Endothelial cell of umbilical vein (primary cell): ENCODE measurements at regions of chr10 and their contacts with region 1.

Region 1: GRCh38 chr10:118754720-118755480 is at the start of gene CACUL1:
- DNase-seq: peak; percentile 100
- H3K4me3 ChIP-seq: peak within 1 kb of the TSS; percentile 55 to 96 (median 84)
- H3K27ac ChIP-seq: peak within 1 kb of the TSS; percentile 42
- H3K4me1 ChIP-seq: peaks cover 13% of the 10 kb centered on the region
- H3K27me3 ChIP-seq: peaks cover 0 to 2% of the 10 kb centered on the region in 2 experiments
- CTCF ChIP-seq: no peak
- POLR2A ChIP-seq: peak; percentile 74
- total RNA-seq, gene CACUL1: 35.1 and 38.6 TPM in 2 replicates

Region 2: DNA sequence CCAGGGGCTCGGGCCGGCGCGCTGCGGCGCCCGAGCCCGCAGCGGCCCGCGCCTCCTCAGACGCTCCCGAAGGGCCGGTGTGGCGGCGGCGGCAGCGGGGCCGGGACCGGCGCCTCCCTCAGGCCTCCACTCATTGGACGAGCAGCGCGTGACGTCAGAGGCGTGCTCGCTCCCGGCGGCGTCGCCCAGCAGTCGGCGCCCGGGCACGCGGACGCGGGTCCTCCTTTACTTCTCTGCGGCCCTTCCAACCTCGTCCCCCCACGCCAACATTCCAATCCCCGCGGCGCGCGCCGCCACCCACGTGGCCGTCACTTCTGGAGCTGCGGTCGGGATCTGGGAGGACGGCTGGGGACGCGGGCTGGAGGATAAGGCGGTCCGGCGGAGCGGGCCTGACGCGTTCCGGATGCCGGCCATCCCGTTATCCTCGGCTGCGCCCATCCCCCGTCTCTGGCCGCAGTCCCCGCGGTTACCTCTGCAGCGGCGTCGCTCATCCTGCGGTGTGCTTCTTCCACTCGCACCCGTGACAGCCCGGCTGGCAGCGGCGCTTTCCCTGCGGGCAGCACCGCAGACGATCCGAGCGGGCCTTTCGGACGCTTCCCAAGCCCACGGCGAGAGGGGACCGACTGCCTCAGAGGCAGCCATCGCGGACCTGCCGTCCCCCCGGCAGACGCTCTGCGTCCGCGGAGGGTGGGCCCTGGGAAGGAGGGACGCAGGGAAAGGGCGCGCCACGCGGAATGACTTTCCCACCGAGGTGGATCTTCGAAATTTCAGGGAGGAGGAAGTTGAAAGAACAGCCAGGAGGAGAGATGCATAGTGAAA is 1379.3 kb before region 1 on chr10 and contains the start of gene PDZD8:
- CTCF ChIA-PET with region 1: no interaction called
- POLR2A ChIA-PET with region 1: no interaction called
- dilution Hi-C with region 1: no loop called
- intact Hi-C with region 1: loop called (anchors 10 kb)
- DNase-seq: peak; percentile 92
- H3K4me3 ChIP-seq: peak within 1 kb of the TSS; percentile 47 to 88 (median 84)
- H3K27ac ChIP-seq: peak within 1 kb of the TSS; percentile 83
- H3K4me1 ChIP-seq: peaks cover 21% of the 10 kb centered on the region
- H3K27me3 ChIP-seq: peaks cover 22 to 29% of the 10 kb centered on the region in 2 experiments
- CTCF ChIP-seq: no peak
- POLR2A ChIP-seq: peak; percentile 87
- total RNA-seq, gene PDZD8: 21.9 and 22.6 TPM in 2 replicates

Region 3: DNA sequence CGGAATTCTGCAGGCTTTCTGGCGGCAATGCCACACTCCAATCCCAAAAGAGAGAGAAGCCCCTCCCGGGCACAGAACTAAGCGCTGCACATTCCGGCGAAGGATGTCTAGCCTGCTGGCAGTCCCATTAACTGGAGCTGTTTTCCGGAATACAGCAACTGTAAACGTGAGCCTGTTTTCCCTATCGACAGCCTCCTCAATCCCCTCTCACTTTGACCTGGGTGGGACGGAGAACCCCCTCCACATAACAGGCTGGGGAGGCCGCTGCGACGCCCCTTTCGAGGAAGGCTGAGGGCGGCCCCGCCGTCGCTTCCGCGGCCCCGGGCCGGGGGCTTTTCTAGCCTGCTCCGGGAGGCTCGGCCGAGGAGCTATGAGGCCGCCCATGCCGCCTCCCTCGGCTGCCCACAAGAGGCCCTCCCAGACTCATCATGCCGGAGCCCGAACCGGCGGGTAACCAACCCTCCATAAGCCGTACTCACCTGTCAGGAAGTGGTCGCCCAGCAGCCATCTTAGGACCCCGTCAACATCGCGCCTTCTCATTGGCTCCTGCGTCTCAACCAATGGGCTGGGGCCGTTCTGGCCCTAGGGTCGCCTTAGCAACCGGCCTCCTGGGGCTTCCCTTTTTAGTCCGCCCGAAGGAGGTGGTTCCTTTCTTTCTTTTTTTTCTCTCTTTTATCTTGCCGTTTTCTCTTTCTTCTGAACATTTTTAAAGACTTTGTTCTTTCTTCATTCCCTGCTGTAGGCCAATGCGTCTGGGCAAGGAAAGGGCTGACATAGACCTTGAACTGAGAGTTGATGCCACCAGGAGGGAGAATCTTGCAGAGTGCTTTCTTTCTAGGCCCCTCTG is 412.9 kb before region 1 on chr10 and contains the start of gene FAM204A:
- CTCF ChIA-PET with region 1: no interaction called
- POLR2A ChIA-PET with region 1: no interaction called
- dilution Hi-C with region 1: no loop called
- intact Hi-C with region 1: loop called (anchors 10 kb)
- DNase-seq: peak; percentile 96
- H3K4me3 ChIP-seq: peak within 1 kb of the TSS; percentile 72 to 95 (median 91)
- H3K27ac ChIP-seq: peak within 1 kb of the TSS; percentile 11
- H3K4me1 ChIP-seq: peaks cover 13% of the 10 kb centered on the region
- H3K27me3 ChIP-seq: peaks cover 0 to 2% of the 10 kb centered on the region in 2 experiments
- CTCF ChIP-seq: no peak
- POLR2A ChIP-seq: peak; percentile 84
- total RNA-seq, gene FAM204A: 68.7 and 73.7 TPM in 2 replicates

Region 4: GRCh38 chr10:118720685-118721538 is 34.0 kb before region 1 on chr10:
- CTCF ChIA-PET with region 1: interaction called, 24 read pairs
- POLR2A ChIA-PET with region 1: no interaction called
- dilution Hi-C with region 1: no loop called
- intact Hi-C with region 1: loop called (anchors 2 kb)
- DNase-seq: peak; percentile 75
- H3K4me3 ChIP-seq: no peak overlapping the region
- H3K27ac ChIP-seq: no peak overlapping the region
- H3K4me1 ChIP-seq: peaks cover 11% of the 10 kb centered on the region
- H3K27me3 ChIP-seq: no peaks in the 10 kb centered on the region
- CTCF ChIP-seq: peak; percentile 47 to 51
- POLR2A ChIP-seq: no peak

Region 5: DNA sequence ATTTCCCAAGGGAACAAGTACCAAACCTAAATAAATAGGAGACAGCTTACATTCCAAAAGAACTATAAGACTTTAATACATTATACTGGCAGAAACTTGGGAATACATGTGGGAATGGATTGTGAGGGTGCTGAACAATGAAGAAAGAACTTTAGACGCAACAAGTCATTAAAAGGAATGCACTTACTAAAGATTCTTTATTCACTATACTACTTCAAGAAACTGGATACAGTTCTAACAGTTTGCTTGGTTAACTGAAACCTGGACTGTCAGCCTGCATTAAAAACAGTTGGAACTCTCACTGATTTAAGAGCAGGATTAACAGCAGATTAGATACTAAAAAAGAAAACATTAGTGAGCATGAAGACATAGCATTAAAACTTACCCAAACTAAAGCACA is 12.1 kb before region 1 on chr10:
- CTCF ChIA-PET with region 1: no interaction called
- POLR2A ChIA-PET with region 1: interaction called, 3 read pairs
- dilution Hi-C with region 1: no loop called
- intact Hi-C with region 1: loop called (anchors 1 kb)
- DNase-seq: no peak
- H3K4me3 ChIP-seq: no peak overlapping the region
- H3K27ac ChIP-seq: no peak overlapping the region
- H3K4me1 ChIP-seq: no peaks in the 10 kb centered on the region
- H3K27me3 ChIP-seq: no peaks in the 10 kb centered on the region
- CTCF ChIP-seq: no peak
- POLR2A ChIP-seq: no peak